SK-N-SH (cell line): ENCODE measurements at regions of chrX and their contacts with region 1.

Region 1: DNA sequence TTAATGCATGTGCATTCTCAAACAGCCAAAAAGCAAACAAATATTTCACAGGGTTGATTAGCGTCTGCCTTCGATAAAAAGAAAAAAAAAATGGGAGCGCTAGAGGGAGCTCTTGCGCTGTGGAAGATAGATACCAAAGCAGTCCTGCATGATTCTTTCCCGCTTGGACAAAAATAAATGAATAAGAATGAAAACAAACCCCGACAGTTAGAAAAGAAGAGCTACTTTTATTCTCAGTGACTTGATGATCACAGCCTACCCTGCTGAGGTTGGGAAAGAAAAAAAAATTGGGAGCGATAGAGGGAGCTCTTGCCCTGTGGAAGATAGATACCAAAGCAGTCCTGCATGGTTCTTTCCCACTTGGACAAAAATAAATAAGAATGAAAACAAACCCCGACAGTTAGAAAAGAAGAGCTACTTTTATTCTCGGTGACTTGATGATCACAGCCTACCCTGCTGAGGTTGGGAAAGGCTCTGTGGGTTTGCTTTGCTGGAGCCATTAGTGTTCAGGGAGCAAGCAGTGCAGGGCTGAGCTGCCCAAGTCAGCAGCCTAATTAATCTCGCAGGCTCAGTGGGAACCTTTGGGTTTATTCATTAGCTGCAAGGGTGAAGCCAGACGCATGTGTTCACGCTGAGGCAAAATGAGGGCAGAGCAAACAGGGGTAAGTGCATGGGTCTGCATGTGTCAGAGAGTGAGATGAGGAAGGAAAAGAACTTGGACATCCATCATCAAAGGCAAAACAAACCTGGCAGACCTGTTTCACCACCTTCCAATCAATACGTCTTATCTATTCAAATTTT is 249.3 kb upstream of the PRKX start:
- DNase-seq: peak; percentile 18
- H3K4me3 ChIP-seq: peak overlapping the region in 1 of 2 experiments; percentile 17; a peak in 1 of 4 replicates
- H3K27ac ChIP-seq: no peak overlapping the region
- H3K4me1 ChIP-seq: no peaks in the 10 kb centered on the region
- H3K27me3 ChIP-seq: no peaks in the 10 kb centered on the region
- CTCF ChIP-seq: peak; percentile 70
- EP300 ChIP-seq: no peak
- RAD21 ChIP-seq: peak; percentile 62

Region 2: DNA sequence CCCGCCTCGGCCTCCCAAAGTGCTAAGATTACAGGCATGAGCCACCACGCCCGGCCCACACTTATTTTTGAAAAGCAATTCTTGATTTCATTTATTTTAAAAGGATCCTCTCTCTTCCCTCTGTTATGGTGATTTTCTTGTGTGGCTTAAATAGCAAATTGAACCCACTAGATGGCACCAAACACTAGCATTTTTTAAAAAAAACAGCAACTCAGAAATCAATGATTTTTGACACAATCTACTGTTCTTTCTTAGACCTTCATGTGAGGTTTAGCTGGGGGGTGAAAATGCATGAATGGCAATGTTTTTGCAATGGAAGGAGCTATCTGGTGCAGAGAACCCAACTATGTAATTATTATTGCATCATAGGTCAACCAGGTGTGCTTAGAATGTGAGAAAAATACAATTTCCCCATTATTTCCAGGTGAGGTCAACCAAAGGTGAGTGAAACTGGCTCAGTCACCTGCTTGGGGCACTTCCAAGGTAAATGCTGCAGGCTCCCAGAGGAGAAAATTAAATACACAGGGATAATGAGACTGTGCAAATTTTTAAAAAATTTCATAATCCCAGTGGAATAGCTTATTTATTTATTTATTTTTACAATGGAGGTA is 22.6 kb before region 1 on chrX:
- CTCF ChIA-PET with region 1: interaction called, 23 read pairs
- POLR2A ChIA-PET with region 1: no interaction called
- DNase-seq: peak; percentile 38
- H3K4me3 ChIP-seq: no peak overlapping the region
- H3K27ac ChIP-seq: no peak overlapping the region
- H3K4me1 ChIP-seq: no peaks in the 10 kb centered on the region
- H3K27me3 ChIP-seq: no peaks in the 10 kb centered on the region
- CTCF ChIP-seq: peak; percentile 71
- EP300 ChIP-seq: no peak
- RAD21 ChIP-seq: peak; percentile 72

Region 3: GRCh38 chrX:3950373-3950772 is 12.3 kb before region 1 on chrX:
- CTCF ChIA-PET with region 1: interaction called, 14 read pairs
- POLR2A ChIA-PET with region 1: no interaction called
- DNase-seq: no peak
- H3K4me3 ChIP-seq: no peak overlapping the region
- H3K27ac ChIP-seq: no peak overlapping the region
- H3K4me1 ChIP-seq: no peaks in the 10 kb centered on the region
- H3K27me3 ChIP-seq: no peaks in the 10 kb centered on the region
- CTCF ChIP-seq: no peak
- EP300 ChIP-seq: no peak
- RAD21 ChIP-seq: no peak